Activated CD4-positive, alpha-beta T cell treated with anti-CD3 and anti-CD28 coated beads, Interleukin-2, amount 10 ng/mL, durations not matched to agents 7 days and 5 days (primary cell): ENCODE measurements at regions of chr2 and their contacts with region 1.

Region 1: GRCh38 chr2:174593574-174594203 is 3.9 kb downstream of the WIPF1 start:
- DNase-seq: peak; percentile 88
- H3K4me3 Mint-ChIP-seq: peak overlapping the region; percentile 88
- H3K27ac Mint-ChIP-seq: peak overlapping the region; percentile 99
- H3K4me1 Mint-ChIP-seq: peaks cover 54% of the 10 kb centered on the region
- H3K27me3 Mint-ChIP-seq: peaks cover 2% of the 10 kb centered on the region

Region 2: DNA sequence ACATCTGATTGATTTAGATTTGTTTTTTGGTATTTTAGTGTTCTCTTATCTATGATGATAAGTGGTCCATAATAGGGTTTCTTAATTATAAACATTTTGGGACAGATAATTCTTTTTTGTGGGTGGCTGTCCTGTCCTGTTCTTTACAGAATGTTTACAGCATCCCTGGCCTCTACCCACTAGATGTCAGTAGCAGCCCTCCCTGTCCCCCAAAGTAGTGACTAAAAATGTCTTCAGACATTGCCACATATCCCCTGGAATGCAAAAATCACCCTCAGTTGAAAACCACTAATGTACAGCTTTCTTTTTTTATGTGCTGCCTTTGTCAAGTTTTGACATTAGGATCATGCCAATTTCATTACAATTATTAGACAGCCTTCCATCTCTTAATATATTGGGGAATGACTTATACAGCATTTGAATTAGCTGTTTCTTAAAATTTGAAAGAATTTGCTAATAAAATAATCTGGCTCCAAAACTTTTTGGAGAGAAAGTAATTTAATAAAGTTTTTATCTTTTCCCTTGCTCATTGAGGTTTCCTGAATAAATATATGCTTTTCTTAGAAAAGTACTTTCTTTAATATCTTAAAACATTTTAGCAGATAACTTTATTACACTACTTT is 15.6 kb before region 1 on chr2:
- CTCF ChIA-PET with region 1: interaction called, 10 read pairs
- POLR2A ChIA-PET with region 1: interaction called, 7 read pairs
- DNase-seq: peak; percentile 66
- H3K4me3 Mint-ChIP-seq: no peak overlapping the region
- H3K27ac Mint-ChIP-seq: no peak overlapping the region
- H3K4me1 Mint-ChIP-seq: peaks cover 66% of the 10 kb centered on the region
- H3K27me3 Mint-ChIP-seq: no peaks in the 10 kb centered on the region

Region 3: GRCh38 chr2:174634130-174635014 is 40.7 kb after region 1 on chr2:
- CTCF ChIA-PET with region 1: interaction called, 4 read pairs
- POLR2A ChIA-PET with region 1: interaction called, 53 read pairs
- DNase-seq: peak; percentile 63
- H3K4me3 Mint-ChIP-seq: peak overlapping the region; percentile 96
- H3K27ac Mint-ChIP-seq: peak overlapping the region; percentile 96
- H3K4me1 Mint-ChIP-seq: peaks cover 67% of the 10 kb centered on the region
- H3K27me3 Mint-ChIP-seq: no peaks in the 10 kb centered on the region

Region 4: DNA sequence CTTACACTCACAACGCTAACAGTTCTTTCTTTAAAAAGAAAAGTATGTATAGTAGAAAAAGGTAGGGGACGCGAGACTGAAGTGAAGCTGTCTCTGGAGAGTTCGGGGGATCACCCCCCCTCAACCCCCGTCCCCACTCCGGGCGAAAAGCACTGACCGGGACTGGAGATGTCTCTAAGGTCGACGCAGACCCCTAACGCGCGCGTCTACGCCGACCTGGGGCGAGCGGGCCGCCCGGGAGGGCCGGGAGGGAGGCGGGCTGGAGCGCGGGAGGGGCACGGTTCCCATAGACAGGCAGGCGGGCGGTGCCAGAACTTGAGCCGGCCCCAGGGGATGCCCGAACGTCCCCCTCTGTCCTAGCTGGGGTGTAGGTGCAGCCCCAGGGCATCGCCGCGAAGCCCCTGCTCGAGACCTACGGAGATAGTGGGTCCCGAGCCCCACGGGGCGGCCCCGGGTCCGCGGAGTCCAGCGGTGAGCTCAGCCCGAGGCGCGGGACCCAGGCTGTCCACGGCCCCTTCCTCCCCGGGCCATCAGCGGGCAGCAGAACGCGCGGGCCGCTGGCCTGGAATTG is 88.4 kb after region 1 on chr2:
- CTCF ChIA-PET with region 1: interaction called, 4 read pairs
- POLR2A ChIA-PET with region 1: interaction called, 10 read pairs
- DNase-seq: peak; percentile 35
- H3K4me3 Mint-ChIP-seq: peak overlapping the region; percentile 84
- H3K27ac Mint-ChIP-seq: peak overlapping the region; percentile 90
- H3K4me1 Mint-ChIP-seq: peaks cover 55% of the 10 kb centered on the region
- H3K27me3 Mint-ChIP-seq: no peaks in the 10 kb centered on the region